ENCODE measurements at regions of chr1 and their contacts with region 1.

Region 1: GRCh38 chr1:147273409-147274336 is 31.2 kb downstream of the CHD1L start:
- DNase-seq: no peak
- ATAC-seq: peak; percentile 72 to 81
- H3K4me3 ChIP-seq: peak overlapping the region; percentile 10
- H3K27ac ChIP-seq: no peak overlapping the region
- H3K4me1 ChIP-seq: no peaks in the 10 kb centered on the region
- H3K27me3 ChIP-seq: no peaks in the 10 kb centered on the region

Region 2: GRCh38 chr1:147389532-147390524 is 116.2 kb after region 1 on chr1:
- intact Hi-C with region 1: loop called in 2 of 4 experiments (anchors 5 to 10 kb)
- DNase-seq: peak in 2 of 3 donors; percentile 18 to 33
- ATAC-seq: peak; percentile 29 to 40
- H3K4me3 ChIP-seq: no peak overlapping the region
- H3K27ac ChIP-seq: no peak overlapping the region
- H3K4me1 ChIP-seq: no peaks in the 10 kb centered on the region
- H3K27me3 ChIP-seq: no peaks in the 10 kb centered on the region